ENCODE measurements at regions of chr13 and their contacts with region 1.

Region 1: DNA sequence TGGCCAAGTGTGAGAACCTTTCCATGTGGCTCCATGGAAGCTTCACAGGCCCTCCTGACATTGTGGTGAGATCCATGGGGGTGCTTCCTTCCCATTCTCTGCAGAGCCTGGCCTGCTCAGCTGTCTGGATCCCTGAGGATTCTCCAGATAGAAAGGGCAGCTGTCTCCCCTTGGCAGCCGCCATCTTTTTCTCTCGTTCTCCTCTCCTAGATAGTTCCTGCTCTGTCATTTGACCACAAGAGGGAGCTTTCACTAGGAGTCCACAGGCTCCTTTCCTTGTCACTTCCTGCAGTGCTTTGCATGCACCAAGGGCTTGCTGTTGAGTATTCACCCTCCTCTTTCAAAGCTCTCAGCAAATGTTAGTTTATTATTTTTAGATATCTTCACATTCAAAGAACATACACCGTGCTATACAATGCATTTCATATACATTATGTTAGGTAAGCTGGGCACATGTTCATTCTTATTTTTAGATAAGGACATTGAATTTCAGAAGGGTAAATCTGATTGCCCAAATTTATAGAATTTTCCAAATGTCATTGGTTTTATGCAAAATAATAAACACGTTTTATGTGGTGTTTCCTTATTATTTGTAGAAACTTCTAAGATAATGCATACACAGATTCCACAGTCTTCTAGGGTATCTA is 133.2 kb downstream of the FRY start:
- DNase-seq: no peak
- H3K4me3 ChIP-seq: no peak overlapping the region
- CTCF ChIP-seq: peak; percentile 71

Region 2: DNA sequence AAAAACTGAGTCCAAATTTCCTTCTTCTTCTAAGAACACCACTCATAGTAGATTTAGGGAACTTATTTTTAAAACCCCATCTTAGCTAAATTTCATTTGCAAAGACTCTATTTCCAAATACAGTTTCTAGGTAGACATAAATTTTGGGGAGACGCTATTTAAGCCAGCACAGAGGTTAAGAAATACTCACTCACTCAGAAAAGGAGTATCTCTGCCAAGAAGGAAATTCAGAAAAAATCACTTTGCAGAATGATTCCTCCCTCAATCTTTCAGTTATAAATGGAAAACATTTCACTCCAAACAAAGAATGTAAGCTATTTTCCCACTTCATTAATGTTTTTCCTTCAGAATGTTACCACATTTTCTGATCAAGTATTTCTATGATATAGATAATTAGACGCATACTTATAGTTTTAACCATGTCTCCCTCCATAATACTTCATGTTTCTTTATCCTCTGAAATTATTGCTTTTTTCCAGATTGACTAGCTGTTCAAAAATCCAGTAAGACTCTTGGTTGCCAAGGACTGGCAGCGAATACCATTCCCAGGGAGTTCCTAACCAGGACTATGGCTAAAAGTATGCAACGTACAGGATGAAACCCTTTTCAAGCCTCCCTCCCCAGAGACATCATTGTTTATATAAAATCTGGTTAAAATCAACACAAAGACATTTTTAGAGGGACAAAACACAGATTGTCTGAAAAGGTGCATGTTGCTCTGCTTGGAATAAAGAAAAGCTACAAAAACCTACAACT is 477.9 kb before region 1 on chr13:
- CTCF ChIA-PET with region 1: no interaction called
- POLR2A ChIA-PET with region 1: no interaction called
- DNase-seq: no peak
- H3K4me3 ChIP-seq: no peak overlapping the region
- CTCF ChIP-seq: no peak

Region 3: GRCh38 chr13:32150794-32151193 is 14.0 kb before region 1 on chr13:
- CTCF ChIA-PET with region 1: interaction called, 10 read pairs
- POLR2A ChIA-PET with region 1: no interaction called
- DNase-seq: no peak
- H3K4me3 ChIP-seq: no peak overlapping the region
- CTCF ChIP-seq: no peak

Region 4: GRCh38 chr13:32203736-32204135 is 39.0 kb after region 1 on chr13:
- CTCF ChIA-PET with region 1: interaction called, 12 read pairs
- POLR2A ChIA-PET with region 1: no interaction called
- DNase-seq: no peak
- H3K4me3 ChIP-seq: no peak overlapping the region
- CTCF ChIP-seq: no peak

Region 5: DNA sequence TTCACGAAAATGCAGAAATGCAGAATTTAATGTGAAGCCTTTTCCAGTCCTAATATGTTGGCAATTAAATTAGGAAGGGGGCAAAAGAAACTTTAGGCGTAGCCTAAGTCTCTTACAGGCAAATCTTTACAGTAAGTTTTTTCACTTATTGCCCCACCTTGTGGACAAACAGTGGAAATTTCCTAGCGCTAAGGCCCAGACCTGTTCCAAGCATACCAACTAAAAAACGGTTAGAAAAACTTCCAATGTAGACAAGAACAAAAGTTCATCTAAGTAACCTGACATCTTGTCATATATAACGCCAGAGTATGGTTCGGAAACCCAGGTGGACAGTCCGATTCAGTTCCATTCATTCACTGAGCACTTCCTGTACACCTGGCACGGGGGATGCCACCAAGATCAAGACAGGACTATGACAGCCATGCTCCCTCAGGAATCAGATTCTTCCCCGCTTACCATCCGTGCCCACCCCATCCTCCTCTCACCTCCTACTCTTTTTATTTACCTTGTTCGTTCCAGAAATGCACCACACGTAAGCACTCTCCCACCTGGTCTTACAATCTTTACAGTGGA is 145.5 kb after region 1 on chr13:
- CTCF ChIA-PET with region 1: interaction called, 26 read pairs
- POLR2A ChIA-PET with region 1: no interaction called
- DNase-seq: no peak
- H3K4me3 ChIP-seq: no peak overlapping the region
- CTCF ChIP-seq: peak; percentile 58

Region 6: GRCh38 chr13:32548837-32549236 is 384.1 kb after region 1 on chr13:
- CTCF ChIA-PET with region 1: no interaction called
- POLR2A ChIA-PET with region 1: no interaction called
- DNase-seq: no peak
- H3K4me3 ChIP-seq: no peak overlapping the region
- CTCF ChIP-seq: no peak

Region 7: DNA sequence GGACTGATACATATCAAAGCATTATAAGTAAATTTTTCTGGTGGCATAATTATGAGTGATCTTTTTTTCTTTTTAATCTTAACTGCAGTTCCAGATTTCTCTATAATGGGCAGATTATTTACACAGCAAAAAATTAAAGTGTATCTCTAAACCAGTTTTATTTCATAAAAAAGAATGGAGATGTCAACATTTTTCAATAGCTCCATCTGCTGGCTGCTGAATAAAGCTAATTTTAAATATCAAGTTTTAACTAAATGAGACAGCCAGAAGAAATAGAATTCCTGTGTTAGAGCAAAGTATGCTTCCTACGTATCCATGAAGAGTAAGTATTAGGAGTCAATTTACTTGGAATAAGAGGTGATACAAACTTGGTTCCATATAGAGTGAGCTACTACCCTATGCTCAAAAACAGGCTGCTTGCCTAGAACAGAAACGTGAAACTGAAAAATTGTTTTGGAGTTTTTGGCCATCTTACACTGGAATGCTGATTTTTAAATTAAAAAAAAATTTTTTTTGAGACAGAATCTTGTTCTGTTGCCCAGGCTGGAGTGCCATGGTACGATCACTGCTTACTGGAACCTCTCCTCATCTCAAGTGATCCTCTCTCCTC is 416.5 kb after region 1 on chr13:
- CTCF ChIA-PET with region 1: interaction called, 10 read pairs
- POLR2A ChIA-PET with region 1: no interaction called
- DNase-seq: no peak
- H3K4me3 ChIP-seq: no peak overlapping the region
- CTCF ChIP-seq: peak; percentile 14